ENCODE measurements at regions of chr1 and their contacts with region 1.

Region 1: DNA sequence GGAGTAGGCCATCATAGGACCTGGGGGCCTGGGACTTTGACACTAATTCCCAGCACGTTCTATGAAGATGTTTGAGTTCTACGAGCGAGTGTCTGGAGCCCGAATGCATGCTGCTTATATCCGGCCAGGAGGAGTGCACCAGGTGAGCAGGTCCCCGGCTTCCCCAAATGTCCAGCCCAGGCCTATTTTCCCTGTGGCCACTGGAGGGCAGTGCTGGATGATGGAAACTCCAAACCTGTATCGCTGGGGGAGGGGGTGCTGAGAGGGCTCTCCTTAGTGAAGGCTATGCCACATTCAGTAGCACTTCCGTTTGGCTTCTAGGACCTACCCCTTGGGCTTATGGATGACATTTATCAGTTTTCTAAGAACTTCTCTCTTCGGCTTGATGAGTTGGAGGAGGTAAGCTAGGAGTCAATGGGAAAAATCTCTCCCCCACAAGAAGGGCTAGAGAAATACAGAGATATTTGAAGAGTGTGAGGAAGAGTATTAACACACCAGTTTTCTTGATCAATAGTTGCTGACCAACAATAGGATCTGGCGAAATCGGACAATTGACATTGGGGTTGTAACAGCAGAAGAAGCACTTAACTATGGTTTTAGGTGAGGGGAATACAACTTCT is 5.2 kb upstream of the FCER1G start:
- H3K4me3 ChIP-seq: no peak overlapping the region
- H3K27ac ChIP-seq: no peak overlapping the region
- H3K4me1 ChIP-seq: no peaks in the 10 kb centered on the region
- CTCF ChIP-seq: peak; percentile 83

Region 2: GRCh38 chr1:161192476-161193465 is 17.1 kb before region 1 on chr1:
- CTCF ChIA-PET with region 1: interaction called, 31 read pairs
- POLR2A ChIA-PET with region 1: no interaction called
- H3K4me3 ChIP-seq: no peak overlapping the region
- H3K27ac ChIP-seq: no peak overlapping the region
- H3K4me1 ChIP-seq: no peaks in the 10 kb centered on the region
- CTCF ChIP-seq: peak; percentile 71

Measured in HEK293 (cell line).